B cell (primary cell): ENCODE measurements at regions of chr1 and their contacts with region 1.

Region 1: GRCh38 chr1:85259118-85259911 is at the start of gene C1orf52:
- DNase-seq: peak; percentile 94
- ATAC-seq: peak; percentile 98
- H3K4me3 ChIP-seq: peak within 1 kb of the TSS; percentile 66 to 94 (median 85)
- H3K4me3 Mint-ChIP-seq: peak within 1 kb of the TSS; percentile 95
- H3K27ac ChIP-seq: peak within 1 kb of the TSS; percentile 62 to 83
- H3K27ac Mint-ChIP-seq: peak within 1 kb of the TSS; percentile 92
- H3K4me1 ChIP-seq: peaks cover 17 to 18% of the 10 kb centered on the region in 2 donors
- H3K4me1 Mint-ChIP-seq: peaks cover 38% of the 10 kb centered on the region
- H3K27me3 ChIP-seq: no peaks in the 10 kb centered on the region
- H3K27me3 Mint-ChIP-seq: no peaks in the 10 kb centered on the region
- CTCF ChIP-seq: peak; percentile 99
- total RNA-seq, gene C1orf52: 39.9 and 45.3 TPM in 2 replicates

Region 2: GRCh38 chr1:85048296-85049064 is 210.8 kb before region 1 on chr1 and contains the start of gene MCOLN3:
- CTCF ChIA-PET with region 1: interaction called, 4 read pairs
- POLR2A ChIA-PET with region 1: no interaction called
- intact Hi-C with region 1: loop called (anchors 5 kb)
- DNase-seq: peak; percentile 64
- ATAC-seq: peak; percentile 70
- H3K4me3 ChIP-seq: peak within 1 kb of the TSS in 4 of 5 experiments; percentile 39 to 69 (median 53)
- H3K4me3 Mint-ChIP-seq: peak within 1 kb of the TSS; percentile 87
- H3K27ac ChIP-seq: no peak within 1 kb of the TSS
- H3K27ac Mint-ChIP-seq: no peak within 1 kb of the TSS
- H3K4me1 ChIP-seq: peaks cover 14 to 19% of the 10 kb centered on the region in 2 donors
- H3K4me1 Mint-ChIP-seq: peaks cover 14% of the 10 kb centered on the region
- H3K27me3 ChIP-seq: peaks cover 0 to 36% (median 35%) of the 10 kb centered on the region in 4 experiments
- H3K27me3 Mint-ChIP-seq: peaks cover 51% of the 10 kb centered on the region
- CTCF ChIP-seq: no peak
- total RNA-seq, gene MCOLN3: 0.10 TPM in 1 of 2 replicates, not detected in the other

Region 3: DNA sequence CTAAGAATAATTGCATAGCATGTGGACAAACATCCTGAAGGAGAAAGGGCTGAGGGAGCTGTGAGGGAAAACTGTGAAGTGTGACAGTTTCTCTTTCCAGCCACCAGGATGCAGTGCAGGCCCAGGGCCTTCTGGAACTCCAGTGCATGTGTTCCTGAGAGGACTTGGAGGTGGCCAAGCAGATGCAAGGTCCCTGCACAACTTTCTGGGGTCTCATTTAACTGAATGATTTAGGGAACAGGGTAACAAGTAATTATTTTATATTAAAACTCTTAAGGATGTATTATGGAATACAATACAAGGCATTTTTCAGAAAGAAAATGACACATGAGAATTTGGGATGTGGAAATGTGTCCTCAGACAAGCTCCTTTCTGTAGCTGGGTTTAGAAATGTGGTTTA is 149.8 kb before region 1 on chr1:
- CTCF ChIA-PET with region 1: interaction called, 10 read pairs
- POLR2A ChIA-PET with region 1: no interaction called
- intact Hi-C with region 1: loop called (anchors 10 kb)
- DNase-seq: peak; percentile 12
- ATAC-seq: no peak
- H3K4me3 ChIP-seq: no peak overlapping the region
- H3K4me3 Mint-ChIP-seq: no peak overlapping the region
- H3K27ac ChIP-seq: no peak overlapping the region
- H3K27ac Mint-ChIP-seq: no peak overlapping the region
- H3K4me1 ChIP-seq: no peaks in the 10 kb centered on the region
- H3K4me1 Mint-ChIP-seq: no peaks in the 10 kb centered on the region
- H3K27me3 ChIP-seq: no peaks in the 10 kb centered on the region
- H3K27me3 Mint-ChIP-seq: peaks cover 7% of the 10 kb centered on the region
- CTCF ChIP-seq: no peak

Region 4: GRCh38 chr1:85240174-85240601 is 19.1 kb before region 1 on chr1:
- CTCF ChIA-PET with region 1: interaction called, 11 read pairs
- POLR2A ChIA-PET with region 1: no interaction called
- intact Hi-C with region 1: no loop called
- DNase-seq: no peak
- ATAC-seq: no peak
- H3K4me3 ChIP-seq: no peak overlapping the region
- H3K4me3 Mint-ChIP-seq: no peak overlapping the region
- H3K27ac ChIP-seq: no peak overlapping the region
- H3K27ac Mint-ChIP-seq: no peak overlapping the region
- H3K4me1 ChIP-seq: no peaks in the 10 kb centered on the region
- H3K4me1 Mint-ChIP-seq: peaks cover 1% of the 10 kb centered on the region
- H3K27me3 ChIP-seq: peaks cover 0 to 7% (median 4%) of the 10 kb centered on the region in 4 experiments
- H3K27me3 Mint-ChIP-seq: peaks cover 15% of the 10 kb centered on the region
- CTCF ChIP-seq: no peak

Region 5: DNA sequence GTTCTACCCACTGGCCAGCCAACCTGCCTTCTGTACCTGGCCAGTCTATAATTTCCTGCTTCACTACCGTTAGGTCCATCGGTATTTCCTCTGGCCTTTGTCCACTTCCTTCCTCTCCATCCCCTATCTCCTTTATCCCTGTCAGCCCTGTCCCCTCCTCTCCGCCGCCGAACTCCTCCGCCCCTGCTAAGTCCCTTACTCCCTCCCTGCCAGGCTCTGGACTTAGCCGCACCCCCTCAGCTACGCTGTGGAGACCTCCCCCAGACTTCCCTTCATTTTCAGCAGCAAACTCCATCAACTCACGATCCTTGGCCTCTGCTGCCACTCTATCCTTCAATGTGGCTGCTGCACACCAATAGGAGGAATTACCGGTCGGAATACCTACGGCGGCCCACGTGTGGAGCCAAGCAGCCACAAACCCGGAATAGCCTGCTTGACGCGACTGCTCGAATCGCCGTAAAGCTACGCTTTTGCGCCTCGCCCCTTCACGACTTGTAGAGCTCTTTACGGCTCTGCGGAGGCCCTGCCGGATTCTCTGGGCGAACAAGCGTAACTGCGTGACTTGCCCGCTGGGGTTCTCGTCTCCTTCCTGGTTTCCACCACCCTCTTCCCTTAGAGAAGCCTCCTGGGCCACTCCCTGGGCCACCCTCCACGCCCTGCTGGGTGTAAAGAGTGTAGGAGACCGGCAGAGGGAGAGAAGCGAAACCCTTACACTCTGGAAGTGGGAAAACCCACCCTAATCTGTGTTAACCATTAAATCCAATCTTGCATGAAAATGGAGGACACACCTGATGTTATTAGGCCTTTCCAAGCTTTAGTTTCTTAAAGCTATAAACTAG is 448.9 kb after region 1 on chr1 and contains the start of gene ZNHIT6:
- CTCF ChIA-PET with region 1: no interaction called
- POLR2A ChIA-PET with region 1: no interaction called
- intact Hi-C with region 1: loop called (anchors 2 kb)
- DNase-seq: peak; percentile 92
- ATAC-seq: peak; percentile 95
- H3K4me3 ChIP-seq: peak within 1 kb of the TSS; percentile 76 to 99 (median 91)
- H3K4me3 Mint-ChIP-seq: no peak within 1 kb of the TSS
- H3K27ac ChIP-seq: peak within 1 kb of the TSS; percentile 73
- H3K27ac Mint-ChIP-seq: no peak within 1 kb of the TSS
- H3K4me1 ChIP-seq: peaks cover 16 to 22% of the 10 kb centered on the region in 2 donors
- H3K4me1 Mint-ChIP-seq: peaks cover 16% of the 10 kb centered on the region
- H3K27me3 ChIP-seq: peaks cover 0 to under 1% (median 0%) of the 10 kb centered on the region in 4 experiments
- H3K27me3 Mint-ChIP-seq: no peaks in the 10 kb centered on the region
- CTCF ChIP-seq: peak; percentile 27
- total RNA-seq, gene ZNHIT6: 16.3 and 17.3 TPM in 2 replicates